Endothelial cell of umbilical vein (primary cell): ENCODE measurements at regions of chr13 and their contacts with region 1.

Region 1: DNA sequence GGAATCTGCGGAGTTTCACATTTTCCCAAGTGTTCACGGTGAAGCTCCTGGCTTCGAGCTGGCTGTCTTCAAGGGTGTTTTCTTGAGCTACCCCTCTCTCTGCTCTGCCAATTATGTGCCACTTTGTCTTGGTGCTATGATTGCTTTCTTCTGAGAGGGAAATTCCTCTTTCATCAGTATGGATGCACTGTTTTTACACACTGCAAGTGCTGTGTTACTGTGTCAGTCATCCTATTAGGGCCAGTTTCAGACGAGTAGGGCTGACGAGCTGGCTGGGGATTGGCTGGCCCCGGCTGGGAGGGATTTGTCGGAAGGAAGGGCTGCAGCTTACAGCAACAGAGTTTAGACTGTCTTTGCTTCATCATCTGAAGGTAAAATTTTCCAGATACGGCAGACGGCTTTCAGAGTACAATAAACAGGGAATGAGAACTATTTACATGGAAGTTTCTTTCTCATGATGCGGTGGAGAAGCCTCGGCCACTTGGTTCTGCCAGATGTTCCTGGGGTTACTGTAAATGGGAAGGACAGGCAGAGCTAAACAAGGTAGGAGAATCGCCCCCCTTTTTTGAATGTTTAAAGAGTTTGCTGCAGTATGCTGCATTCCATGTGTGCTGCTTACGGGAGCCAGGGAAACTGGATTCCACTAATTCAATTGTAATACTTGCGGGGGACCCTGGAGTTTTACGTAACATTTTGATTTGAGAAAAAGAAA is at the start of gene MBNL2:
- DNase-seq: peak; percentile 98
- H3K4me3 ChIP-seq: peak within 1 kb of the TSS; percentile 54 to 100 (median 98)
- H3K27ac ChIP-seq: peak within 1 kb of the TSS; percentile 89
- H3K4me1 ChIP-seq: peaks cover 32% of the 10 kb centered on the region
- H3K27me3 ChIP-seq: no peaks in the 10 kb centered on the region
- CTCF ChIP-seq: no peak
- POLR2A ChIP-seq: peak; percentile 70
- total RNA-seq, gene MBNL2: 75.6 and 76.5 TPM in 2 replicates

Region 2: DNA sequence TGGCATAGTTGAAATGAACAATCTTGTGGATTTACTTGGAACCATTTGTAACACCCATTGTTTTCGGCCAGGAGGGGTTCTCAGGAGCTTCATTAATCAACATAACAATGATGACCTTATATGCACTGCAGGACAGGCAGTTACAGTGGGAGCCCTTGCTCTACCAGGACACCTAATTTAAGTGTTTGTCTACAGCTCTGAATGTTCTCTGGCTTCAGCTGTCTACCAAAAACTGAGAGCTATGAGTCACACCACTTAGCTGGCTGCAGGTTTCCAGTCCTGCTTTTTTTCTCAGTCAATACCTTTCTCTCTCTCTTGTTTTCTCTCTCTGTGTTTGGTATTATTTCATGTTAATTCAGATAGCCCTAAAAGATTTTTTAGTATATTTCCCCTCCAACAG is 105.4 kb before region 1 on chr13:
- CTCF ChIA-PET with region 1: interaction called, 9 read pairs
- POLR2A ChIA-PET with region 1: interaction called, 4 read pairs
- dilution Hi-C with region 1: loop called (anchors 25 kb)
- intact Hi-C with region 1: loop called (anchors 1 kb)
- DNase-seq: peak; percentile 69
- H3K4me3 ChIP-seq: no peak overlapping the region
- H3K27ac ChIP-seq: no peak overlapping the region
- H3K4me1 ChIP-seq: peaks cover 31% of the 10 kb centered on the region
- H3K27me3 ChIP-seq: no peaks in the 10 kb centered on the region
- CTCF ChIP-seq: no peak
- POLR2A ChIP-seq: no peak

Region 3: GRCh38 chr13:97242755-97243497 is 20.8 kb after region 1 on chr13:
- CTCF ChIA-PET with region 1: interaction called, 44 read pairs
- POLR2A ChIA-PET with region 1: interaction called, 9 read pairs
- dilution Hi-C with region 1: no loop called
- intact Hi-C with region 1: loop called (anchors 1 kb)
- DNase-seq: peak; percentile 43
- H3K4me3 ChIP-seq: no peak overlapping the region
- H3K27ac ChIP-seq: peak overlapping the region; percentile 79
- H3K4me1 ChIP-seq: peaks cover 93% of the 10 kb centered on the region
- H3K27me3 ChIP-seq: no peaks in the 10 kb centered on the region
- CTCF ChIP-seq: no peak
- POLR2A ChIP-seq: no peak

Region 4: GRCh38 chr13:97268772-97269171 is 46.6 kb after region 1 on chr13:
- CTCF ChIA-PET with region 1: interaction called, 29 read pairs
- POLR2A ChIA-PET with region 1: interaction called, 6 read pairs
- dilution Hi-C with region 1: no loop called
- intact Hi-C with region 1: no loop called
- DNase-seq: peak; percentile 72
- H3K4me3 ChIP-seq: no peak overlapping the region
- H3K27ac ChIP-seq: peak overlapping the region; percentile 77
- H3K4me1 ChIP-seq: peaks cover 71% of the 10 kb centered on the region
- H3K27me3 ChIP-seq: no peaks in the 10 kb centered on the region
- CTCF ChIP-seq: peak; percentile 35 to 36
- POLR2A ChIP-seq: no peak

Region 5: DNA sequence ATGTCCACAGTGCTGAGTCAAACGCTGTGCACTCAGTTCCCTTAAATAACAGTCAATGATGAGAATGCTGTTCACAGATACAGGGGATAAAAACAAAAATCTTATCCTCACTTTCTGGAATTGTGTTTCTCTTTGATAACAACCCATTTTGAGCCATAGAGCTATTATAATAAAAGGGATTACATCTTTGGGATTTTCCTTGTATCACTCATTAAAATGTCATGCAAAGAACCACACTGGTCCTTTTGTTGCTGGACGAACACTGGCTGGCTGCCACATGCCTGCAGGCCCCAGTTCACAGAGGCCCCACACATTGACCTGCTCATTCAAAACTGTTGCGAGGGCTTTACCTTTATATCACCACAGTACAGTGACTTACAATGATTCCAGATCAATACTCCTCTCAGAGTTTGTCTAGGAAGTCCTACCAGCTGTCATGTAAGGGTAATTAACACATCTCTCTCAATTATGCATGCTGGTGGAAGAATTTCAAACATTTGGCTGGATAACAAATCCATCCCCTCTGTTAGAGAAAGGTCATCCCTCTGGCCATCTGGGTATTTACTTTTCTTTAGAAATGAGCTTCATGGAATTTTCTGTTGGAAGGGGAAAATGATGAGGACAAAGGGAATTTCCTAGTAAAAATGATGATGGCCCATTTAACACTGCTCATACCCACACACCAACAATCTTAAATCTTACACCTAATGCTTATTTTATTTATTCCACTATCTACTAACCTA is 85.9 kb after region 1 on chr13:
- CTCF ChIA-PET with region 1: interaction called, 3 read pairs
- POLR2A ChIA-PET with region 1: interaction called, 3 read pairs
- dilution Hi-C with region 1: no loop called
- intact Hi-C with region 1: loop called (anchors 1 kb)
- DNase-seq: peak; percentile 87
- H3K4me3 ChIP-seq: no peak overlapping the region
- H3K27ac ChIP-seq: peak overlapping the region; percentile 83
- H3K4me1 ChIP-seq: peaks cover 38% of the 10 kb centered on the region
- H3K27me3 ChIP-seq: no peaks in the 10 kb centered on the region
- CTCF ChIP-seq: no peak
- POLR2A ChIP-seq: no peak

Region 6: DNA sequence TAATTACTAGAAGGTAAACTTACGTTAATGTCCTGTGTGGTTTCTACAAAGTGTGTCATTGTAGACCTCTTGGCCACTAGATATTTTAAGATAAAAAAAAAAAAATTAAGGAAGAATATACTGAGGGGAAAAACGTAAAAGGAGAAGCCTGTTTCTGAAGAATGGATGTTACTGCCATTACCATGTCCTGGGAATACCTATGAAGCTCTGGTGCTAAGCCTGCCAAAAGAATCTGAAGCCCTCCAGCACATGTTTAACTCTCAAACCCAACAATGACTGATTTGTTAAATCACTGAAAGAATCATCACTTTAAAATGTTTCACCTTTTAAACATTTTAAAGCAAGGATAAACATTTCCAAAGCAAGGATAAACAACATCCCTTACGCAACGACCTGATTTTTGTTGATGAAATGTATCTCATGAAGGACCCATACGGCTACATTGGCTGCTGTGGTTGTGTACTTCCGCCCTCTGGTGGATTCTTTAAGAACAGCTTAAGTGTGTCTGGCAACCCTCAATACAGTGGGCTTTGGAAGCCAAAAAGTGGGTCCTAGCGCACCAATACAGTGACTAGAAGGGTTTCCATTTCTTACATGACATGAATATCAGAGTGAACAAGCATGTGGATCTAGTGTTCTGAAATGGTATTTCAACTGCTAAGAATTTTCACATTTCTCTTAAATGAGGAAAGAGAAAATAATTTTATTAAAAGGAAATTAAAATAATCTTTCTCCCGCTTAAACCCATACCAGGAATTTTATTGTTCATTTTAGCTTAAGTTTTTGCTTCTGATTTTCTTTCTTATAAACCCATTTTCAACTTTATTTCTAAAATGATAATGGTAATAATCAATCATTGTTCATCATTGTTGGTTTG is 137.3 kb after region 1 on chr13:
- CTCF ChIA-PET with region 1: interaction called, 58 read pairs
- POLR2A ChIA-PET with region 1: interaction called, 4 read pairs
- dilution Hi-C with region 1: no loop called
- intact Hi-C with region 1: loop called (anchors 1 kb)
- DNase-seq: peak; percentile 81
- H3K4me3 ChIP-seq: no peak overlapping the region
- H3K27ac ChIP-seq: peak overlapping the region; percentile 20
- H3K4me1 ChIP-seq: no peaks in the 10 kb centered on the region
- H3K27me3 ChIP-seq: no peaks in the 10 kb centered on the region
- CTCF ChIP-seq: peak; percentile 66 to 80
- POLR2A ChIP-seq: no peak

Region 7: GRCh38 chr13:97659602-97660001 is 437.5 kb after region 1 on chr13:
- CTCF ChIA-PET with region 1: interaction called, 3 read pairs
- POLR2A ChIA-PET with region 1: no interaction called
- dilution Hi-C with region 1: no loop called
- intact Hi-C with region 1: loop called (anchors 1 kb)
- DNase-seq: peak; percentile 45
- H3K4me3 ChIP-seq: no peak overlapping the region
- H3K27ac ChIP-seq: no peak overlapping the region
- H3K4me1 ChIP-seq: peaks cover 54% of the 10 kb centered on the region
- H3K27me3 ChIP-seq: no peaks in the 10 kb centered on the region
- CTCF ChIP-seq: peak; percentile 30 to 41
- POLR2A ChIP-seq: no peak